PC-3 (cell line): ENCODE measurements at regions of chr7 and their contacts with region 1.

Region 1: GRCh38 chr7:110612680-110613079 is 478.2 kb upstream of the LRRN3 start:
- DNase-seq: no peak
- ATAC-seq: no peak
- H3K4me3 ChIP-seq: no peak overlapping the region
- H3K27ac ChIP-seq: no peak overlapping the region
- H3K4me1 ChIP-seq: no peaks in the 10 kb centered on the region
- H3K27me3 ChIP-seq: no peaks in the 10 kb centered on the region
- CTCF ChIP-seq: no peak

Region 2: GRCh38 chr7:110573862-110574528 is 38.7 kb before region 1 on chr7:
- CTCF ChIA-PET with region 1: no interaction called
- POLR2A ChIA-PET with region 1: no interaction called
- intact Hi-C with region 1: loop called (anchors 1 kb)
- DNase-seq: peak; percentile 85
- ATAC-seq: peak; percentile 96
- H3K4me3 ChIP-seq: peak overlapping the region; percentile 38
- H3K27ac ChIP-seq: peak overlapping the region; percentile 89
- H3K4me1 ChIP-seq: peaks cover 14% of the 10 kb centered on the region
- H3K27me3 ChIP-seq: no peaks in the 10 kb centered on the region
- CTCF ChIP-seq: no peak

Region 3: GRCh38 chr7:110704219-110704618 is 91.5 kb after region 1 on chr7:
- CTCF ChIA-PET with region 1: no interaction called
- POLR2A ChIA-PET with region 1: no interaction called
- intact Hi-C with region 1: no loop called
- DNase-seq: no peak
- ATAC-seq: no peak
- H3K4me3 ChIP-seq: no peak overlapping the region
- H3K27ac ChIP-seq: no peak overlapping the region
- H3K4me1 ChIP-seq: no peaks in the 10 kb centered on the region
- H3K27me3 ChIP-seq: no peaks in the 10 kb centered on the region
- CTCF ChIP-seq: no peak